HepG2 (cell line): ENCODE measurements at regions of chr7 and their contacts with region 1.

Region 1: DNA sequence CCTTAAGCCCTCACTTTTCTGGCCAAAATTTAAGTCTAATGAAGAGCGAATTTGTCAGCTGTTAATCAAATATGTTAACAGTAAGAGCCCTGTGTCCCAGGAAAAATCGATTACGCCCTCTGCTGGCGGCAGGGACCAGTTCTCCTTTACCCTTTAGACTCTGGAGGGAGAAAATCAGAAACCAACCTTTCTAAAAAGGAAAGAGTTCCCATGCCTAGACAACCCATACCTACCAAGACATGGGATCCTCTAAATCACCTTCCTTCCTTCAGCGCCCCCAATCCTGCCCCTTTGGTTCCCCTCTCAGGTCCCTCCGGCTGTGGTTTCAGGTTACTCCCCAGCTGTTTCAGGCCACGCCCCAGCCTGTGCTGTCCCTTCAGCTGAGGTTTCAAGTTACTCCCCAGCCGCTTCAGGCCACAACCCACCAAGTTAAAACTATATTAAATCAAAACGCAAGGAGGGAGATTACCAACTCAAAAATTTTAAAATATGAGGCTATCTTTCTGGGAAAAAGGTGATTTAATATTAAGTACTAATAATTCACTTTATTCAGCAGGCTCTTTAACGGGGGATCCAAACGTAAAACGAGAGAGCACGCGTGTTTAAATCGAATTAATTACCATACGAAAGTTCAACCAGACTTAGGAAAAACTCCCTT is 1.4 kb upstream of the AKR1B15 start:
- DNase-seq: peak; percentile 50
- ATAC-seq: peak; percentile 90
- H3K4me3 ChIP-seq: peak overlapping the region; percentile 39 to 63 (median 44); a peak in 5 of 6 replicates
- H3K27ac ChIP-seq: no peak overlapping the region
- H3K4me1 ChIP-seq: peaks cover 21% of the 10 kb centered on the region
- H3K27me3 ChIP-seq: peaks cover 0 to 38% of the 10 kb centered on the region in 2 experiments; a peak in 3 of 5 replicates
- CTCF ChIP-seq: peak; percentile 79
- EP300 ChIP-seq: no peak
- POLR2A ChIP-seq: no peak
- RAD21 ChIP-seq: peak; percentile 50; the same call in 1 of the 2 replicates

Region 2: DNA sequence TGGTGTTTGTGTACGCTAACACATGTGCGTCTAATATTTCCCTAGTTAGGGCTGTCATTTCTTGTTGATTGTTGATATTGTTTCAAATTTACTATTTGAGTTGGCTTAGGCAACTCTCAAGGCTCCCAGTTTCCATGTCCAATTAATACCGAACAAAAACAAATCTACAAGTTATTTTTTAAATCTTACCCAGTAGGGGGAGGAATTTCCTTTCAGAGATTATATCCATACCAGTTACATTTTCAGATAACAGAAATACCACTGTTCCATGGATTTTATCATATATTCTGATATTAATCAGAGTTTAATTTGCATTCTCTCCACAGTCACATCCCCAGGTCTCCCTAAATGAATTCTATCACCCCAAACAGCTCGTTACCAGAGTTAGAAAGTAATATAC is 27.4 kb before region 1 on chr7:
- CTCF ChIA-PET with region 1: interaction called, 7 read pairs
- POLR2A ChIA-PET with region 1: no interaction called
- in situ Hi-C with region 1: no loop called
- intact Hi-C with region 1: loop called (anchors 1 kb)
- DNase-seq: no peak
- ATAC-seq: peak; percentile 40; the same call in 1 of the 3 replicates
- H3K4me3 ChIP-seq: no peak overlapping the region; a peak in 1 of 6 replicates
- H3K27ac ChIP-seq: no peak overlapping the region
- H3K4me1 ChIP-seq: no peaks in the 10 kb centered on the region
- H3K27me3 ChIP-seq: peaks cover 0 to 5% of the 10 kb centered on the region in 2 experiments; a peak in 2 of 5 replicates
- CTCF ChIP-seq: no peak
- EP300 ChIP-seq: no peak
- POLR2A ChIP-seq: no peak
- RAD21 ChIP-seq: no peak

Region 3: GRCh38 chr7:134599371-134599770 is 51.8 kb after region 1 on chr7:
- CTCF ChIA-PET with region 1: no interaction called
- POLR2A ChIA-PET with region 1: no interaction called
- in situ Hi-C with region 1: no loop called
- intact Hi-C with region 1: no loop called
- DNase-seq: no peak
- ATAC-seq: no peak
- H3K4me3 ChIP-seq: no peak overlapping the region
- H3K27ac ChIP-seq: no peak overlapping the region
- H3K4me1 ChIP-seq: peaks cover 33% of the 10 kb centered on the region
- H3K27me3 ChIP-seq: no peaks in the 10 kb centered on the region
- CTCF ChIP-seq: no peak
- EP300 ChIP-seq: no peak
- POLR2A ChIP-seq: no peak
- RAD21 ChIP-seq: no peak